ENCODE measurements at regions of chr14 and their contacts with region 1.

Region 1: DNA sequence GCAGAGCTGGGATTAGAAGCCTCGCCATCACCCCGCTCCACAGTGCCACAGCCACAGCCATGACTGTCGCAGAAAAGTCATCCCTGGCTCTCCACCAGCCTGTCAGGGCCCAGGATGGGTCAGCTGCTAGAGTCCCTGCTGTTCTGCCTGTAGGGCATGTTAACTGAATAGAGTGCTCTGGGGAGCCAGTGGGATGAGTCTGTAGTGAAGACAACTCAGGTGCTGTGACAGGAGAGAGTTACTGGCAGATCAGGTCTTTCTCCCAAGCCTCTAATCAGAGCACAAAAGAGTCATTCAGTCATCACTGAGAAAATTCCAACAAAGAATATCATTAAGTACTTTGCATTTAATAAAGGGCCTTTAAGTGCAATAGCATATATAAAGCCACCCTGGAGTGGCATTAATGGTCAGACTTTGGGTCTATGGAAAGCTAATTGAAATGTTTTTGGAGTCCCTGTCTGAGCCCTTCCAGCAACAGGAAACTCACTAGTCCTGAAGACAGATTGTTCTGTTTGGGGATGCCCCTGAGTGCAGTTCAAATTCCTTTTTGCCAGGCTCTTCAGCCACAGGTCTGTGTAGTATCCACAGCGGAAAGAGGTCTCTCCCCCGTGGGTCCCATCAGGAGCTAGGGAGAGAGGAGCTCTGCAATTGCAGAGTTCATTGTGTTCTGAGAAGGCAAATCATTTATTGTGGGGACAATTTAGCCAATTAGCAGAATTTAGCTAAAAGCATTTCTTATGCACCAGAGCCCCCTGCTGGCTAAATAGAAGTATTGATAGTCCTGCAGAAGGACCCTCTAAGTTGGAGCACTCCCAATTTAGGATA is 45.2 kb upstream of the C14orf132 start:
- DNase-seq: peak; percentile 12
- ATAC-seq: peak; percentile 60; the same call in 1 of the 2 replicates
- H3K4me3 ChIP-seq: no peak overlapping the region
- H3K27ac ChIP-seq: no peak overlapping the region
- H3K4me1 ChIP-seq: no peaks in the 10 kb centered on the region
- H3K27me3 ChIP-seq: no peaks in the 10 kb centered on the region
- CTCF ChIP-seq: peak; percentile 78

Region 2: GRCh38 chr14:95561001-95561412 is 433.0 kb before region 1 on chr14:
- CTCF ChIA-PET with region 1: interaction called, 6 read pairs
- POLR2A ChIA-PET with region 1: no interaction called
- in situ Hi-C with region 1: no loop called
- intact Hi-C with region 1: loop called (anchors 1 kb)
- DNase-seq: peak; percentile 78
- ATAC-seq: peak; percentile 96
- H3K4me3 ChIP-seq: no peak overlapping the region
- H3K27ac ChIP-seq: no peak overlapping the region
- H3K4me1 ChIP-seq: no peaks in the 10 kb centered on the region
- H3K27me3 ChIP-seq: no peaks in the 10 kb centered on the region
- CTCF ChIP-seq: peak; percentile 92

Region 3: DNA sequence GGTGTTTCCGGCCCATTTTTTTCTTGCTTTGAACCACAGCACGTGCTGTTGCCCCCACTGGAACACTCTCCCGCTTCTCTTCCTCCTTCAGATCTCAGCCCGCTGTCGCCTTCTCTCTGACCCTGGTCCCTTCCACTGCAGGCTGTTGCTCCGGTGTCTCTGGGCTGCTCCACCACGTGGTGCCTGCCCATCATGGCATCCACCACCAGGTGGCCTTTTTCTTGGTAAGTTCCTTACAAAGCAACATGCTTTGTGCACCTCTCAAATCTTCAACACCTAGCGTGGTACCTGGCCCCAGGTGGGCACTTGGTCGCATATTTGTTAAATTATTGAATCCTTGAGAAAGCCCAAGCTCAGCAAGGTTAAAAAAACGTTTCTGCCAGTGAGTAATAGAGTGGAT is 98.3 kb before region 1 on chr14:
- CTCF ChIA-PET with region 1: no interaction called
- POLR2A ChIA-PET with region 1: no interaction called
- in situ Hi-C with region 1: no loop called
- intact Hi-C with region 1: loop called (anchors 10 kb)
- DNase-seq: no peak
- ATAC-seq: peak; percentile 70; the same call in 1 of the 2 replicates
- H3K4me3 ChIP-seq: no peak overlapping the region
- H3K27ac ChIP-seq: no peak overlapping the region
- H3K4me1 ChIP-seq: no peaks in the 10 kb centered on the region
- H3K27me3 ChIP-seq: no peaks in the 10 kb centered on the region; the same call in 1 of the 2 replicates
- CTCF ChIP-seq: peak; percentile 57; the same call in 1 of the 2 replicates

Region 4: DNA sequence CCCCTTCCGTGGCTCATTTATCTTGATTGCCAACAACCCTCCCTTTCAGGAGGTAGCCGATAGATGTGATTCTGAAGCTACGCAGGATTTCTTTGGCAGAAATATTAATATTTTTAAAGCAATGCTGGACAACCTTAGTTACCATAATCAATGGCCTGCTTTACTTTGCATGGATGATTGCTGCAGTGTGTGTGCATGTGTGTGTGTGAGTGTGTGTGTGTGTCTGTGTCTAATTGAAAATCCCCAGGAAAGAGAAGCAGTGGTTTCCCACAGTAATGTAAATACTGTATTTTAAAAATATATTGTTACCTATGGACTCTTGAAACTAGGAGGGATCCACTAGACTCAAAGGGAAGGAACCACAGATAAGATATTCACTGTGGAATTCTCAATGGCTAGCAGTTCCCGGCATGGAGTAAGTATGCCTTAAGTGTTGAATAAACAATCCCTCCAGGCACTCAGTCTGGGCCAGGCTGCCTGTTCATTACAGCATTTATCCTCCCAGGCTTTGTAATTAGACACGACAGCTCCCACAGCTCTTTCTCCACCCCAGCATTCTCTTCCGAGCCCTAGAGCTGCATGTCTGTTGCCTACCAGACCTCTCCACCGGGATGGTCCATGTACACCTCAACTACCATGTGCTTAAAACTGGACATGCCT is 22.7 kb after region 1 on chr14:
- CTCF ChIA-PET with region 1: no interaction called
- POLR2A ChIA-PET with region 1: no interaction called
- in situ Hi-C with region 1: no loop called
- intact Hi-C with region 1: no loop called
- DNase-seq: no peak
- ATAC-seq: no peak
- H3K4me3 ChIP-seq: no peak overlapping the region
- H3K27ac ChIP-seq: no peak overlapping the region
- H3K4me1 ChIP-seq: no peaks in the 10 kb centered on the region
- H3K27me3 ChIP-seq: no peaks in the 10 kb centered on the region; the same call in none of the 2 replicates
- CTCF ChIP-seq: no peak

Region 5: GRCh38 chr14:96100161-96101029 is 106.4 kb after region 1 on chr14:
- CTCF ChIA-PET with region 1: interaction called, 11 read pairs
- POLR2A ChIA-PET with region 1: no interaction called
- in situ Hi-C with region 1: no loop called
- intact Hi-C with region 1: loop called (anchors 5 kb)
- DNase-seq: peak; percentile 28
- ATAC-seq: peak; percentile 59
- H3K4me3 ChIP-seq: no peak overlapping the region
- H3K27ac ChIP-seq: no peak overlapping the region
- H3K4me1 ChIP-seq: peaks cover 7% of the 10 kb centered on the region
- H3K27me3 ChIP-seq: no peaks in the 10 kb centered on the region
- CTCF ChIP-seq: peak; percentile 88

Region 6: DNA sequence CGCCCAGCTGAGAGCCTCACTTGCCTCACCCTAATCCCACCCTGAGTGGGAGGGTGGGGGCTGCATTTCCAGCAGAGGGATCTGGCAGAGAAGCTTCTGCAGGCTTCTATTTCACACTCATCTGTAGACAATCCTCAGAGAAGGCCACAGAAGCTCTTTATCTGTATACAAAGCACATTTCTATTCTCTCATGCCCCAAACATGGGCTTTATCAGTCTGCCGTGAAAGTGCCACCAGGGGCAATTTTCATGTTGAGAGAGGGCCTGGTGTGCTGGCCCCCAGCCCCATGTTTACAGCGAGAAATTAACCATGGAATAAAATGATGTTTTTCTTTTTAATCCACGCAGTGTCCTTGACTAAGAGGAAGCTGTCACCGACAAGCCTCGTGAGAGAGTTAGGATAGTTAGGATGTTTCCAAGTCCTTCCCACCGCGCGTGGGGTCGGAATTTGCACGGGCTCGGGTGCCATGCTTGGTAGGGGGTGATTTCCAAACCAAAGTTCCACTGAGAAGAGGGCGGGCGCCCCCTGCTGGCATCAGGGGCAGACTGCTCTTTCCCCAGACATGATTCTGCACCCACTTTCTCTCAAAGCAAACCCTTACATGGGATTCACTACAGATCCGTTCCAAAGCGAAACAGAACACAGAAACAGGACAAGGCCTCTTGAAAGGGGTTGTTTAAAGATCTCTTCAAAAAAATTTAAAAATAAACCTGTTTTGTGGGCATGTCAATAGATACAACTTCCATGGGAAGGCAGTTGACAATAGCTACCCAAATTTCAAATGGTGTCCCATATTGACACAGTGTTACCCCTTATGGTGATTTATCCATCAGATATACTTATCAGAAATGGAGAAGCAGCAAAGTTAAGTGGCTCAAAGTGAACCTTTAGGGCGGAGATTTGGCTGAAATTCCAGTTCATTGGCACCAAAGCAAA is 281.5 kb after region 1 on chr14:
- CTCF ChIA-PET with region 1: interaction called, 3 read pairs
- POLR2A ChIA-PET with region 1: no interaction called
- in situ Hi-C with region 1: no loop called
- intact Hi-C with region 1: loop called (anchors 10 kb)
- DNase-seq: peak; percentile 22
- ATAC-seq: no peak
- H3K4me3 ChIP-seq: no peak overlapping the region
- H3K27ac ChIP-seq: no peak overlapping the region
- H3K4me1 ChIP-seq: no peaks in the 10 kb centered on the region
- H3K27me3 ChIP-seq: no peaks in the 10 kb centered on the region
- CTCF ChIP-seq: peak; percentile 91

Measured in Panc1 (cell line).